Cardiac septum (tissue), 1 donor: ENCODE measurements at regions of chr1 and their contacts with region 1.

Region 1: GRCh38 chr1:44294588-44295007 is 60.5 kb downstream of the ERI3 start:
- DNase-seq: no peak

Region 2: DNA sequence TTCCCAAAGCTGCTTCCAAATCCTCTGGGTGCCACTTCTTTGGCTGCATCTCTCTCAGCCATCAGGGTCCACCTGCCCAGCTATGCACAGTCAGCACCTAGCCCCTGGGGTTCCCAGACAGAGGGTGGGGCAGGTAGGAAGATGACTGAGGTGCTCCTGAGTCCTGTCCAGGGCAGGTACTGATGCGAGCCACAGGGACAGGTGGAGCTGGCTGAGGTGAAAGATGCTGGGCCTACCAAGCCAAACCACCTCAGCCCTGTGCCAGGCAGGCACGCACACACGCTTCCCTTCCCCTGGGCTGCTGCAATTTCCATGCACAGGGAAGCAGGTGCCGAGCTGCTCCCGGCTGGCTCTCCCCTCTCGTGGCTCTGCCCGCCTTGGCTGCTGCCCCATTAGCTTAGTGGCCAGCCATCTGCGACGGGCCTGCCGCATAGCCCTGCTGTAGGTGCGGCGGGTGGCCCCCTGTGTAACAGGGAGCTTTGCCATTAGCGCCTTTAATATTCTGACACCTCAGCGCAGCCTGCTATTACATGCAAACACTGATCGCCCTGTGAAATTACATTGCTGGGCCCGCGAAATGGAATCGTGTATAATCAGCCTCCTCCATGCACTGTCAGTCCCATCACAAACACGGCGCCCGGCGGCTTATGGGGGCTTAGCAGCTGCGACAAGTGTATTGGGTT is 42.5 kb before region 1 on chr1:
- intact Hi-C with region 1: loop called (anchors 5 kb)
- DNase-seq: no peak

Region 3: DNA sequence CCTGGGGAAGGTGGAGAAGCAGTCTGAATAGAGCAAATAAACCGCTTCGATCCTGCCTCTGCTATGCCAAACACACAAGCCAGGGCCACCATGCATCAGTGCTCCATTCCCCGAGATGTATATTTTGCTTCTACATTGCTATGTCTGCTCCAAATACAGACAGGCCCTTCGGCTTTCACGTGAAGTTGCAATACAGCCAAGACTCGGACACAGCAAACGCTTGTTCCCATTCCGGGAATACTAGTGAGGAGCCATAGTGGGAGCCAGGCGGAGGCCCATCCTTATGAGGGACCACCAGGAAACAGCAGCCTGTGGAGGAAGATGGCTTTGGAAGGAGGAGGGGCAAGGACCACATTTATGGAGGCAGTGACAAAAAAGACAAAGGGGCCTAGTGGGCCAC is 37.9 kb after region 1 on chr1:
- intact Hi-C with region 1: no loop called
- DNase-seq: no peak